Left colon (tissue), 2 donors: ENCODE measurements at regions of chr1 and their contacts with region 1.

Region 1: DNA sequence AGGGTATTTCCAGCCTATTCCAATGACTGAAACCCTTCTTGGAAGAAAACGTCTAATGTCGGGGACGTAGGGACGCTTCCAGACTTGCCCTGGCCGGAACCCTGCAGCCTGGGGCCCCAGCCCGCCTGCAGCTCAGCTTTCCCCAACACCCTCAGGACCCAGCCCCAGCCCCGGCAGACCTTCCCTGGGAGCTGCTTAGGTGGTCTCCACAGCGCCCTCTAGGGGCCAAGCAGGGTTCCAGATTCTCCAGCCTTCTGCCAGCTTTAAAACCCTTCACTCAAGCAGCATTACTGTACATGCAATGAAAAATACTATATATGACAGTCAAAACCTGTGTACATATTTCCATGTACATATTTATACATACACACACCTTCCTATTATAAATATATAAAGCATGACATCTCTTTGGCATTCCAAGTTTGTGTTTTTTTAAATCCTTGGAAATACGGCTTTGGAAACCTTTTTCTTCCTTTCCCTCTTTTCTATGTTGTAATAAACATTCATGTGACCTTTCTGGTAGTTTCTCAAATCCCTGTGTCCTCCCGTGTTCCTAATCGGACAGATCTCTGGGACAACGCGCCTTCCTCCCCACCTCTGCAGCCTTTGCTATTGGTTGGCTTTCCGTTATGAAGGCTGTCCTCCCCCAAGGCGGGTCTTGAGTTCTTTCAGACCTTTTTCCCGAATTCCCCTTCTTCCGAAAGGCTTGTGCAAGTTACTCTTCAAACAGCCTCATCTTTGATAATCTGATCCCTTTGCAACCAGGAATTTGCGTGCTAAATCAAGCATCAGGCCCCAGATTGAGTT is 60.3 kb downstream of the STUM start:
- DNase-seq: peak; percentile 48 to 74
- ATAC-seq: peak; percentile 75

Region 2: DNA sequence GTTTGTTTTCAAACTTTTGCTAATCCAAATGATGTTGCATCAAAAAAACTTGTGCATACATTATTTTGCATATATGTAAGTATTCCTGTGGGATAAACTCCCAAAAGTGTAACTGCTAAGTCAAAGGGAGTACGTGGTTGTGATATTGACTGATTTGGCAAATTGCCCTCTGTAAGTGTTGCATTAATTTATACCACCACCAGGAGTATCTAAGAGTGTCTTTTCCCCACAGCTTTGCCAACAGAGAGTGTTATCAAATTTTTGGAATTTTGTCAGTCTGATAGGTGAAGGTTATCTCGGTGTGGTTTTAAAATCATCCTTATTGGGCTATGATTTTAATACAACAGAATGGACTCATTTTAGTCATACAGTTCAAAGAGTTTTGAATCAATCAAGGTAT is 170.9 kb before region 1 on chr1:
- intact Hi-C with region 1: loop called in 1 of 2 experiments (anchors 10 kb)
- DNase-seq: no peak
- ATAC-seq: no peak

Region 3: DNA sequence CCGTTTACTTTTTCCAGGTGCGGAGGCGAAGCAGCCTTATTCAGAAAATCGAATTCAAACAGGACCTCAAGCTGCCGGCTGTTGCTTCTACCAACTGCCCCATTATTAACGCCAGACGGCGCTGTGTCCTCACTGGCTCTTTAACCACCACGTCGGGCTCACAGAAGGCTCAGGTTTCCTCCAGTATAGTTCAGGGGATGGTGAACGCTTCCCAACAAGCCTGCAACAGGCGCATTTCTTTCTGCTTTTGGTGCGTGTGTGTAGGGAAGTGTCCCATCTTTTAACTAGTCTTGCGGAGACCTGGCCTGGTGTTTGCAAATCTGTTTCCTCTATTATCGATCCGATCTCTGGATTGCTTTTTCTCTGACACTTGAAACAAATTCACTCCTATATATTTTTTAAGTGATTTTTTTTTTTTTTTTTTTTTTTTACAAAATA is 61.1 kb before region 1 on chr1:
- intact Hi-C with region 1: loop called in 1 of 2 experiments (anchors 5 kb)
- DNase-seq: peak; percentile 80 to 88
- ATAC-seq: peak; percentile 64